ENCODE measurements at regions of chr12 and their contacts with region 1.

Region 1: GRCh38 chr12:46661110-46661845 is 164.5 kb downstream of the SLC38A4 start:
- DNase-seq: peak; percentile 91
- H3K4me3 ChIP-seq: no peak overlapping the region
- H3K27ac ChIP-seq: peak overlapping the region; percentile 83
- H3K4me1 ChIP-seq: peaks cover 65% of the 10 kb centered on the region
- H3K27me3 ChIP-seq: no peaks in the 10 kb centered on the region
- CTCF ChIP-seq: peak; percentile 91

Region 2: GRCh38 chr12:46372544-46373110 is 288.7 kb before region 1 on chr12 and contains the start of gene SLC38A2:
- CTCF ChIA-PET with region 1: interaction called, 5 read pairs
- POLR2A ChIA-PET with region 1: interaction called, 6 read pairs
- intact Hi-C with region 1: loop called (anchors 1 kb)
- DNase-seq: peak; percentile 96
- H3K4me3 ChIP-seq: peak within 1 kb of the TSS; percentile 82
- H3K27ac ChIP-seq: peak within 1 kb of the TSS; percentile 99
- H3K4me1 ChIP-seq: peaks cover 36% of the 10 kb centered on the region
- H3K27me3 ChIP-seq: no peaks in the 10 kb centered on the region
- CTCF ChIP-seq: no peak
- total RNA-seq, gene SLC38A2: 395 and 440 TPM in 2 replicates

Region 3: GRCh38 chr12:46386877-46387629 is 274.2 kb before region 1 on chr12:
- CTCF ChIA-PET with region 1: interaction called, 5 read pairs
- POLR2A ChIA-PET with region 1: no interaction called
- intact Hi-C with region 1: loop called (anchors 5 kb)
- DNase-seq: peak; percentile 94
- H3K4me3 ChIP-seq: peak overlapping the region; percentile 23
- H3K27ac ChIP-seq: peak overlapping the region; percentile 67
- H3K4me1 ChIP-seq: peaks cover 80% of the 10 kb centered on the region
- H3K27me3 ChIP-seq: no peaks in the 10 kb centered on the region
- CTCF ChIP-seq: no peak

Region 4: GRCh38 chr12:46430340-46430948 is 230.8 kb before region 1 on chr12:
- CTCF ChIA-PET with region 1: no interaction called
- POLR2A ChIA-PET with region 1: interaction called, 3 read pairs
- intact Hi-C with region 1: loop called (anchors 5 kb)
- DNase-seq: peak; percentile 72
- H3K4me3 ChIP-seq: no peak overlapping the region
- H3K27ac ChIP-seq: peak overlapping the region; percentile 83
- H3K4me1 ChIP-seq: peaks cover 58% of the 10 kb centered on the region
- H3K27me3 ChIP-seq: no peaks in the 10 kb centered on the region
- CTCF ChIP-seq: no peak

Region 5: GRCh38 chr12:46459861-46460545 is 201.3 kb before region 1 on chr12:
- CTCF ChIA-PET with region 1: no interaction called
- POLR2A ChIA-PET with region 1: no interaction called
- intact Hi-C with region 1: no loop called
- DNase-seq: no peak
- H3K4me3 ChIP-seq: no peak overlapping the region
- H3K27ac ChIP-seq: no peak overlapping the region
- H3K4me1 ChIP-seq: peaks cover 21% of the 10 kb centered on the region
- H3K27me3 ChIP-seq: no peaks in the 10 kb centered on the region
- CTCF ChIP-seq: no peak

Region 6: DNA sequence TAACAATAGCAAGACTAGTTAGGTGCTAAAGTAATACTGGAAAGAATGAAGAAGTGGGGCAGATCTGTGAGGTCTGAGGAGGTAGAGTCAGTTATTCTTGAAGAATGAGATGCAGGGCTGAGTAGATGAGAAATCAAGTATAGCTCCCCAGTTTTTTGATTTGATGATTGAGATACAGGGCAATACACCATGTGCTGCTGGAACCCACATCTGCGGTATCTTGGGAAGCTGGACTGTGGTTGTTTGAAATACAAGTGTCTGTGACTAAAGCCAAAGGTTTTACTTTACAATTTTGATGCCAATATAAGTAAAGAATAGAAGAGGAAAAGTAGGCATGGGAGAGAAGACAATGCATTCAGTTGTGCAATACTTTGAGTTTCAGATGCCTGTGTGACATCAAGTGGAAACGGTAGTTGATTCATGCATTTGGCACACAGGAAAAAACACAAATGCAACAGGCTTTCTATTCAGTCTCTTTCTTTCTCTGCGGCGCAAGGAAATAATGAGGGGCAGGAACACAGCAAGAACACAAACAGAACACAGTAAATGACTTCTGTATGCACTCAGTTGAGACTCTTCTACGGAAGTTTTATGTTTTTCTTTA is 98.6 kb before region 1 on chr12:
- CTCF ChIA-PET with region 1: no interaction called
- POLR2A ChIA-PET with region 1: no interaction called
- intact Hi-C with region 1: loop called (anchors 5 kb)
- DNase-seq: peak; percentile 83
- H3K4me3 ChIP-seq: no peak overlapping the region
- H3K27ac ChIP-seq: peak overlapping the region; percentile 20
- H3K4me1 ChIP-seq: peaks cover 26% of the 10 kb centered on the region
- H3K27me3 ChIP-seq: no peaks in the 10 kb centered on the region
- CTCF ChIP-seq: no peak

Measured in A673 (cell line).